K562 (cell line): ENCODE measurements at regions of chr20 and their contacts with region 1.

Region 1: GRCh38 chr20:8722276-8722928 is 346.5 kb upstream of the PLCB4 start:
- DNase-seq: peak; percentile 33 to 60 (median 40)
- ATAC-seq: peak; percentile 87
- H3K4me3 ChIP-seq: no peak overlapping the region
- H3K27ac ChIP-seq: no peak overlapping the region
- H3K4me1 ChIP-seq: no peaks in the 10 kb centered on the region
- H3K27me3 ChIP-seq: no peaks in the 10 kb centered on the region
- CTCF ChIP-seq: peak; percentile 65 to 74 (median 67)
- EP300 ChIP-seq: no peak
- POLR2A ChIP-seq: no peak
- RAD21 ChIP-seq: peak; percentile 72 to 78

Region 2: DNA sequence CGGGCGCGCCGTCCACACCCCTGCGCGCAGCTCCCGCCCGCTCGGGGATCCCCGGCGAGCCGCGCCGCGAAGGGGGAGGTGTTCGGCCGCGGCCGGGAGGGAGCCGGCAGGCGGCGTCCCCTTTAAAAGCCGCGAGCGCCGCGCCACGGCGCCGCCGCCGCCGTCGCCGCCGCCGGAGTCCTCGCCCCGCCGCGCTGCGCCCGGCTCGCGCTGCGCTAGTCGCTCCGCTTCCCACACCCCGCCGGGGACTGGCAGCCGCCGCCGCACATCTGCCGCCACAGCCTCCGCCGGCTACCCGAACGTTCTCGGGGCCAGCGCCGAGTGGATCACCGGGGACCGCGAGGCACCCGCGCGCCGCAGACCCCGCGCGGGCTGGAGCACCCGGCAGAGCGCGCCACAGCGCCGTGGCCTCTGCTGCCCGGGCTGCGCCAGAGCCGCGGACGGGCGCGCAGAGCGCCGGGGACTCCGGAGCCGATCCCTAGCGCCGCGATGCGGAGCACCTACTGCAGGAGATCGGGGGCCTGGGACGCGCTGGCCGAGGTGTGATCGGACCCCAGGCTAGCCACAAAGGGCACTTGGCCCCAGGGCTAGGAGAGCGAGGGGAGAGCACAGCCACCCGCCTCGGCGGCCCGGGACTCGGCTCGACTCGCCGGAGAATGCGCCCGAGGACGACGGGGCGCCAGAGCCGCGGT is 1954.7 kb before region 1 on chr20 and contains the start of gene BMP2:
- CTCF ChIA-PET with region 1: no interaction called
- POLR2A ChIA-PET with region 1: no interaction called
- in situ Hi-C with region 1: no loop called
- intact Hi-C with region 1: loop called (anchors 5 kb)
- DNase-seq: peak; percentile 9 to 38 (median 17)
- ATAC-seq: peak; percentile 57
- H3K4me3 ChIP-seq: no peak within 1 kb of the TSS; the same call in 1 of the 2 replicates
- H3K27ac ChIP-seq: no peak within 1 kb of the TSS
- H3K4me1 ChIP-seq: peaks cover 0 to 16% of the 10 kb centered on the region in 2 experiments; a peak in 1 of 5 replicates
- H3K27me3 ChIP-seq: no peaks in the 10 kb centered on the region; a peak in 1 of 5 replicates
- CTCF ChIP-seq: no peak
- EP300 ChIP-seq: no peak
- POLR2A ChIP-seq: no peak
- RAD21 ChIP-seq: no peak
- polyA plus RNA-seq, gene BMP2: 0.01 TPM in 1 of 2 experiments, not detected in the other

Region 3: GRCh38 chr20:7375905-7376304 is 1346.5 kb before region 1 on chr20:
- CTCF ChIA-PET with region 1: no interaction called
- POLR2A ChIA-PET with region 1: no interaction called
- in situ Hi-C with region 1: no loop called
- intact Hi-C with region 1: loop called (anchors 5 kb)
- DNase-seq: peak; percentile 2 to 15 (median 6)
- ATAC-seq: no peak
- H3K4me3 ChIP-seq: no peak overlapping the region
- H3K27ac ChIP-seq: no peak overlapping the region
- H3K4me1 ChIP-seq: no peaks in the 10 kb centered on the region
- H3K27me3 ChIP-seq: no peaks in the 10 kb centered on the region
- CTCF ChIP-seq: peak in 1 of 3 experiments; percentile 51; a peak in 2 of 6 replicates
- EP300 ChIP-seq: no peak
- POLR2A ChIP-seq: no peak
- RAD21 ChIP-seq: peak; percentile 24 to 34; a peak in 2 of 4 replicates

Region 4: GRCh38 chr20:7926767-7927166 is 795.6 kb before region 1 on chr20:
- CTCF ChIA-PET with region 1: no interaction called
- POLR2A ChIA-PET with region 1: no interaction called
- in situ Hi-C with region 1: loop called (anchors 25 kb)
- intact Hi-C with region 1: no loop called
- DNase-seq: peak in 1 of 4 experiments; percentile 3
- ATAC-seq: no peak
- H3K4me3 ChIP-seq: no peak overlapping the region
- H3K27ac ChIP-seq: no peak overlapping the region
- H3K4me1 ChIP-seq: no peaks in the 10 kb centered on the region
- H3K27me3 ChIP-seq: no peaks in the 10 kb centered on the region
- CTCF ChIP-seq: peak in 1 of 3 experiments; percentile 32; a peak in 2 of 6 replicates
- EP300 ChIP-seq: no peak
- POLR2A ChIP-seq: no peak
- RAD21 ChIP-seq: peak in 1 of 2 experiments; percentile 64; a peak in 3 of 4 replicates

Region 5: DNA sequence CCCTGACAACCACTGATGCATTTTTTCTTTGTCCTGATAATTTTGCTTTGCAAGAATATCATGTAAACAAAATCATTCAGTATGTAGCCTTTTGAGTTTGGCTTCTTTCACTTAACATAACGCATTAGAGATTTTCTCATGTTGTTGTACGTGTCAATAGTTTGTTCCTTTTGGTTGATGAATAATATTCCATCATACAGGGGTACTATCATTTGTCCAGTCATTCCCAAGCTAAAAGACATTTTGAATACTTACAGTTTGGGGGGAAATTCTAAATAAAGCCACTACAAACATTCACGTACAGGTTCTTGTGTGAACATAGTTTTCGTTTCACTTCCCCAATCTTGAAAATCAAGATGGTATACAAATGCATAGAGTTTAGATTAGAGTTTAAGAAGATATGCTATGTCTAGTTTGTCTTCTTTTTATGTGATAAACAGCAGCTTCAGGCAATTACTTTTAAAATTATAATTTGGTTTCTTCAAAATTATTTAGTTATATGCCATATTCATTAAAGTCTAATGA is 787.3 kb before region 1 on chr20:
- CTCF ChIA-PET with region 1: interaction called, 4 read pairs
- POLR2A ChIA-PET with region 1: no interaction called
- in situ Hi-C with region 1: loop called (anchors 25 kb)
- intact Hi-C with region 1: loop called (anchors 2 kb)
- DNase-seq: no peak
- ATAC-seq: no peak
- H3K4me3 ChIP-seq: no peak overlapping the region
- H3K27ac ChIP-seq: no peak overlapping the region
- H3K4me1 ChIP-seq: no peaks in the 10 kb centered on the region
- H3K27me3 ChIP-seq: no peaks in the 10 kb centered on the region
- CTCF ChIP-seq: no peak
- EP300 ChIP-seq: no peak
- POLR2A ChIP-seq: no peak
- RAD21 ChIP-seq: no peak

Region 6: GRCh38 chr20:8043687-8044282 is 678.6 kb before region 1 on chr20:
- CTCF ChIA-PET with region 1: interaction called, 8 read pairs
- POLR2A ChIA-PET with region 1: no interaction called
- in situ Hi-C with region 1: loop called (anchors 25 kb)
- intact Hi-C with region 1: loop called (anchors 5 kb)
- DNase-seq: peak; percentile 27 to 45 (median 40)
- ATAC-seq: peak; percentile 78
- H3K4me3 ChIP-seq: no peak overlapping the region
- H3K27ac ChIP-seq: no peak overlapping the region
- H3K4me1 ChIP-seq: no peaks in the 10 kb centered on the region
- H3K27me3 ChIP-seq: no peaks in the 10 kb centered on the region
- CTCF ChIP-seq: peak; percentile 16 to 59 (median 28); a peak in 3 of 6 replicates
- EP300 ChIP-seq: no peak
- POLR2A ChIP-seq: no peak
- RAD21 ChIP-seq: peak; percentile 52 to 65

Region 7: DNA sequence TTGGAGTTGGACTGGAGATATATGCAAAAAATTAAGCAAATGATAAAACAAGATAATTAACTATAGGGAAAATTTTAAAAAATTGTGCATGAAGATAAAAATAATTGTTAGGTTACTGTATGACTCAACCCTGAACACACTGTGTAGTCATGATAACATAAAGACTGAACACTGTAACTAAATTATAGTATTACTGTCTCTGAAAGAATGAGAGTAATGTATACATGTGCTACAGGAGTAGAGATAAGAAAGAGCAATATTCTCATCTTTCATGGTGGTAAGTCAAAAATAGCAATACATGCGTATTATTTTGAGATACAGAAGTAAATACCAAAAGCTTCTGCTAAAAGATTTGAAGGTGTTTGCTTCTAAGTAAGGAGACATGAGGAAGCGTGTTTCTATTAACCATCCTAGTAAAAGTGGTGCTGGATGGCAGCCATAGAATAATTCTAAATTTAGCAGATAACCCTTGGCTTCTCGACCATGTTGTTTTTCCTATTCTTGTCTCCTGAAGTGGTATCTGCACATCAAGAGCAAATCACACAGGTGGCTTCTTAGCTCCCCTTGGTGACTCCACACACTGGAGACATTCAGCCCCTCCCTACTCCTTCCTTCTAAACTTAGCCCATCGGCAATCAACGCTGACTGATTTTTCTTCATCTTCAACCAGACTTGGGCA is 44.2 kb before region 1 on chr20:
- CTCF ChIA-PET with region 1: no interaction called
- POLR2A ChIA-PET with region 1: no interaction called
- in situ Hi-C with region 1: no loop called
- intact Hi-C with region 1: no loop called
- DNase-seq: no peak
- ATAC-seq: no peak
- H3K4me3 ChIP-seq: no peak overlapping the region
- H3K27ac ChIP-seq: no peak overlapping the region
- H3K4me1 ChIP-seq: no peaks in the 10 kb centered on the region
- H3K27me3 ChIP-seq: no peaks in the 10 kb centered on the region
- CTCF ChIP-seq: no peak
- EP300 ChIP-seq: no peak
- POLR2A ChIP-seq: no peak
- RAD21 ChIP-seq: no peak